ENCODE measurements at regions of chr7 and their contacts with region 1.

Region 1: GRCh38 chr7:12067141-12067831 is 143.8 kb upstream of the TMEM106B start:
- DNase-seq: peak; percentile 28
- H3K4me3 ChIP-seq: no peak overlapping the region
- H3K27ac ChIP-seq: no peak overlapping the region
- H3K4me1 ChIP-seq: no peaks in the 10 kb centered on the region
- H3K27me3 ChIP-seq: no peaks in the 10 kb centered on the region
- CTCF ChIP-seq: peak; percentile 46 to 70

Region 2: GRCh38 chr7:11427686-11428273 is 639.5 kb before region 1 on chr7:
- CTCF ChIA-PET with region 1: no interaction called
- dilution Hi-C with region 1: no loop called
- in situ Hi-C with region 1: no loop called
- intact Hi-C with region 1: loop called (anchors 1 kb)
- DNase-seq: peak; percentile 38
- H3K4me3 ChIP-seq: no peak overlapping the region
- H3K27ac ChIP-seq: no peak overlapping the region
- H3K4me1 ChIP-seq: no peaks in the 10 kb centered on the region
- H3K27me3 ChIP-seq: peaks cover 4% of the 10 kb centered on the region
- CTCF ChIP-seq: peak; percentile 64 to 73

Region 3: GRCh38 chr7:11831736-11832495 is 235.4 kb before region 1 on chr7 and contains the start of gene THSD7A:
- CTCF ChIA-PET with region 1: no interaction called
- dilution Hi-C with region 1: no loop called
- in situ Hi-C with region 1: no loop called
- intact Hi-C with region 1: loop called (anchors 2 kb)
- DNase-seq: peak; percentile 17
- H3K4me3 ChIP-seq: peak within 1 kb of the TSS; percentile 30 to 46 (median 41)
- H3K27ac ChIP-seq: no peak within 1 kb of the TSS
- H3K4me1 ChIP-seq: peaks cover 14% of the 10 kb centered on the region
- H3K27me3 ChIP-seq: peaks cover 23% of the 10 kb centered on the region
- CTCF ChIP-seq: no peak
- total RNA-seq, gene THSD7A: not detected

Region 4: DNA sequence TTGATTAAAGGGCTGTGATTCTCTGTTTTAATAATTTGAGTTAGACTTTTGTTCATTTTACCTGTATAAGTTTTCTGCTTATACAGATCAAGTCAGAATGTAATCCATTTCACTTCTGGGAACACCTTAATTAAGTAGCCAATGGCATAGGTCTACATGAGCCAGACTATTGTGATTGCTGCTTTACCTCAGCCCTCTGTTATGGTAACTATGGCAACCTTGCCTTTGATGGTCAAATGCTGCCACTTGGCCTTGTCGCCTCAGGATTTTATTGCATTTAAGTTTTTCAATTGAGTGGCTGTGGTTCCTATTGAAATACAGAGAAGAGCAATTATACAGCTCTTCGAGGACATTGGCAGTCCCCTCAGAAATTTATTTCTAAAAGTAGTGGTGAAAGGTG is 79.5 kb after region 1 on chr7:
- CTCF ChIA-PET with region 1: no interaction called
- dilution Hi-C with region 1: no loop called
- in situ Hi-C with region 1: no loop called
- intact Hi-C with region 1: no loop called
- DNase-seq: no peak
- H3K4me3 ChIP-seq: no peak overlapping the region
- H3K27ac ChIP-seq: no peak overlapping the region
- H3K4me1 ChIP-seq: no peaks in the 10 kb centered on the region
- H3K27me3 ChIP-seq: no peaks in the 10 kb centered on the region
- CTCF ChIP-seq: no peak

Region 5: GRCh38 chr7:12211054-12211710 is 143.9 kb after region 1 on chr7 and contains the start of gene TMEM106B:
- CTCF ChIA-PET with region 1: no interaction called
- dilution Hi-C with region 1: no loop called
- in situ Hi-C with region 1: no loop called
- intact Hi-C with region 1: loop called (anchors 1 kb)
- DNase-seq: peak; percentile 93
- H3K4me3 ChIP-seq: peak within 1 kb of the TSS; percentile 59 to 62 (median 60)
- H3K27ac ChIP-seq: peak within 1 kb of the TSS; percentile 55
- H3K4me1 ChIP-seq: peaks cover 8% of the 10 kb centered on the region
- H3K27me3 ChIP-seq: no peaks in the 10 kb centered on the region
- CTCF ChIP-seq: peak in 1 of 2 donors; percentile 39
- total RNA-seq, gene TMEM106B: 33.5 to 75.2 TPM

Measured in mammary epithelial cell (primary cell).